Mammary epithelial cell (primary cell): ENCODE measurements at regions of chr14 and their contacts with region 1.

Region 1: DNA sequence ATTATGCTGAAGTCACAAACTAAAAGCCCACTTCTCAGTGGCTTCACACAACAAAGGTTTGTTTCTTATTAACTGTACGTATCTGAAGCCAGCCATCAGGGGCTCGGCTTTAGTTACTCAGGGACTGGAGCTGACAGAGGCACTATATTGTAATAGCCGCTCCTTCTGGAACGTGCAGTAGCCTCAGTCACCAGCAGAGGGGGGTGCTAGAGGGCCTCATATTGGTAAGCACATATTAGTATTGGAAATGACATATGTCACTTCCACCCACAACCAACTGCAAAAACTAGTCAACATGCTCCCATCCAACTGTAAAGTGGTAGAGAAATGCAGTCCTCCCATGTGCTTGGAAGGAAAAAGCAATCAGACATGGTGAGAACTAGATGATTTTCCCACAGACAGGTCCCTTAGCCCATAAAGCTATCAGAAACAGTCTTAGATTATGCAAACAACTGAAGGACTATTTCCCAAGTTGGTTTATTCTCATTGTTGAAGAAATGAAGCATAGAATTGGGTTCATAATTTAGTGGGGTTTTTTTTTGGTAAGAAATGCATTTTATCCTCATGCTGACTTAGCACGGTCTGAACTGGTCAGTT is 183.6 kb upstream of the G2E3 start:
- DNase-seq: peak; percentile 26
- H3K4me3 ChIP-seq: no peak overlapping the region
- H3K27ac ChIP-seq: no peak overlapping the region
- H3K4me1 ChIP-seq: no peaks in the 10 kb centered on the region
- H3K27me3 ChIP-seq: peaks cover 3% of the 10 kb centered on the region
- CTCF ChIP-seq: peak; percentile 89 to 92

Region 2: GRCh38 chr14:30443368-30444007 is 68.1 kb after region 1 on chr14:
- CTCF ChIA-PET with region 1: interaction called, 3 read pairs
- dilution Hi-C with region 1: no loop called
- in situ Hi-C with region 1: no loop called
- intact Hi-C with region 1: loop called (anchors 1 kb)
- DNase-seq: peak; percentile 12
- H3K4me3 ChIP-seq: no peak overlapping the region
- H3K27ac ChIP-seq: no peak overlapping the region
- H3K4me1 ChIP-seq: no peaks in the 10 kb centered on the region
- H3K27me3 ChIP-seq: peaks cover 2% of the 10 kb centered on the region
- CTCF ChIP-seq: peak; percentile 43 to 62

Region 3: DNA sequence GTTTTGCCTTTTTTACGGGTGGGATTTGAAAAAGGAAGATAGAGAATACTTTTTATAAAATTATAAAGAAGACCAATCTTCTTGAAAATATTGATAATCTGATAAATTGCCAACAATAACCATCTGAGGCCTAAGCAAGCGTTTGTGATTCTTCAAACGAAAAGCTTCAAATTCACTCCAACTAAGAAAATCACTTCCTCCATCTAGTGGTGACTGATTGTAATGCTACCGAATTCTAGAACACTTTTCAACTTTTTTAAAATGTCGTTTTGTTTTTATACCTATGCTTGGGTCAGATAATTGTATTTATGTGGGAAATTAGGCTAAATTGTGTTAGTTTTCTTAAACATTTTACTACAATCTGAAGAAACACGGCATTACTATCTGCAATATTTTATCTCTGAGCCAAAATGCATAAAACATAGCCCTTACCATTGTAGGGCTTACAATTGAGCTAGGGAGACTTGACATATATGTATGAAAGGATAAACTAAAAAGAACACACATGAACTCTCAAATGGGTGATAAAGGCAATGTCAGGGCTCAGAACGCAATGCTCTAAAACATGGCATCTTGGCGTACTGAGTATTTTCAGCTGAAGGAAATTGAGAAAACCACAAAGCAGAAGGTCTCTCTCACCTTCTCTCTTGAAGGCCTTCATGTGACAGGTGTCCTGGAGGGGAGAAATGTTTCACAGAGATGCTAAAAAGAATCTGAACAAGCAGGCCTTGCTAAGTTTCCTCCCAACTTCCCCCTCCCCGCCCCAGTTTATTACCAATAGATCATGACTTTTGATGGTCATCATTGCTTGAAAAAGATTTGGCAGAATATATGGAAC is 146.7 kb after region 1 on chr14:
- CTCF ChIA-PET with region 1: no interaction called
- dilution Hi-C with region 1: no loop called
- in situ Hi-C with region 1: no loop called
- intact Hi-C with region 1: loop called (anchors 2 kb)
- DNase-seq: peak; percentile 17
- H3K4me3 ChIP-seq: no peak overlapping the region
- H3K27ac ChIP-seq: no peak overlapping the region
- H3K4me1 ChIP-seq: no peaks in the 10 kb centered on the region
- H3K27me3 ChIP-seq: no peaks in the 10 kb centered on the region
- CTCF ChIP-seq: peak; percentile 68 to 76